Dorsolateral prefrontal cortex (tissue), 120 donors: ENCODE measurements at regions of chr6 and their contacts with region 1.

Region 1: GRCh38 chr6:105087571-105088211 is 92.1 kb downstream of the POPDC3 start:
- DNase-seq: peak in 4 of 10 donors; percentile 13 to 39 (median 29)
- H3K4me3 ChIP-seq: no peak overlapping the region
- H3K27ac ChIP-seq: no peak overlapping the region
- H3K27me3 ChIP-seq: no peaks in the 10 kb centered on the region
- CTCF ChIP-seq: peak; percentile 84 to 99 (median 93)

Region 2: DNA sequence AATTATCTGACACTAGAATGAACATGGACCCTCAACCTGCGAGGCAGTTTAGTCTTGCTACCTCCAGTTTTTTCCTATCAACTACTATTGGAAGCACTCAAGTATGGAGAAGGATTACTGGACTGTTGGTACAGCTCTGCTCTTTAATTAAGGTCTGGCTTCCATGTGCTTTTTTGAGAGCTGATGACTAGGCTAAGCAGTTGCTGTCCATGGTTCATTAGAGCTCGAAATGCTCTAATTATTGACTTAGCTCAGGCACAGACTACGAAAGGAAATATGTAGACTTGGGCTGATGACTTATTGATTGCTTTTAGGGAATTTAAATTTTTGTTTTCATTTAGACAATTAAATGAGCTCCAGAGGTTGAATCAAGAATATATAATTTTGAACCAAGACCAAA is 1509.6 kb before region 1 on chr6:
- intact Hi-C with region 1: no loop called
- DNase-seq: no peak
- H3K4me3 ChIP-seq: no peak overlapping the region
- H3K27ac ChIP-seq: no peak overlapping the region
- H3K27me3 ChIP-seq: no peaks in the 10 kb centered on the region
- CTCF ChIP-seq: no peak

Region 3: DNA sequence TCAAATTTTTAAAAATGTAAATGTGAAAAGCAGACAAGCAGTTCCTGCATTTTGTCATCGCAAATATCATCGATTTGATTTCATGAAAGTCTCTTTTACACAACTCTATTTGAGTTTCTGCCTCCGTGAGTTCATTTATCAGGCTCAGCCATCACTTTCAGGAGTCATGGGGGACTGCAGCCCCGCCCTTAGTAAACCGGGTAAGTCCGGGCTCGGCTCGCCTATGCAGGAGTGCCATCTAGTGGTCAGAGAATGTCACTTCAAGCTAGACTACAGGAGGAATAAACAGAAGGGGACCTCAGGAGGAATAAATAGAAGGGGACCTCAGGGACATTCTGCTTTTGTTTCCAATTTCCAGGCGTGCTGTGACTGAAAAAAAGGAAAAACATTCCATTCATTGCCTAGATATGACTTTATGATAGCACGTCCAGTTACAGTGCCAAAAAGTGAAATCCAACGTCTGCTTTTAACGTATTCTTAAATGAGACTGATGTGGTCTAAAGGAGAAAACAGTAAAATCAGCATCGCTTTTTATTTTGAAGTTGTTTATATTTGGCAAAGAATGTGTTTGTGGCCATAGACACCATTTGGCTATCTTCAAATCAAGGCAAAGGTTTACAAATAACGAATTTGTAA is 561.9 kb before region 1 on chr6:
- intact Hi-C with region 1: loop called in 1 of 2 experiments (anchors 5 kb)
- DNase-seq: peak; percentile 57 to 85 (median 80)
- H3K4me3 ChIP-seq: peak overlapping the region; percentile 14 to 68 (median 44)
- H3K27ac ChIP-seq: peak overlapping the region in 56 of 59 donors; percentile 8 to 88 (median 69)
- H3K27me3 ChIP-seq: no peaks in the 10 kb centered on the region
- CTCF ChIP-seq: peak; percentile 86 to 99 (median 94)

Region 4: GRCh38 chr6:105045526-105045925 is 42.2 kb before region 1 on chr6:
- intact Hi-C with region 1: no loop called
- DNase-seq: no peak
- H3K4me3 ChIP-seq: no peak overlapping the region
- H3K27ac ChIP-seq: no peak overlapping the region
- H3K27me3 ChIP-seq: no peaks in the 10 kb centered on the region
- CTCF ChIP-seq: no peak

Region 5: DNA sequence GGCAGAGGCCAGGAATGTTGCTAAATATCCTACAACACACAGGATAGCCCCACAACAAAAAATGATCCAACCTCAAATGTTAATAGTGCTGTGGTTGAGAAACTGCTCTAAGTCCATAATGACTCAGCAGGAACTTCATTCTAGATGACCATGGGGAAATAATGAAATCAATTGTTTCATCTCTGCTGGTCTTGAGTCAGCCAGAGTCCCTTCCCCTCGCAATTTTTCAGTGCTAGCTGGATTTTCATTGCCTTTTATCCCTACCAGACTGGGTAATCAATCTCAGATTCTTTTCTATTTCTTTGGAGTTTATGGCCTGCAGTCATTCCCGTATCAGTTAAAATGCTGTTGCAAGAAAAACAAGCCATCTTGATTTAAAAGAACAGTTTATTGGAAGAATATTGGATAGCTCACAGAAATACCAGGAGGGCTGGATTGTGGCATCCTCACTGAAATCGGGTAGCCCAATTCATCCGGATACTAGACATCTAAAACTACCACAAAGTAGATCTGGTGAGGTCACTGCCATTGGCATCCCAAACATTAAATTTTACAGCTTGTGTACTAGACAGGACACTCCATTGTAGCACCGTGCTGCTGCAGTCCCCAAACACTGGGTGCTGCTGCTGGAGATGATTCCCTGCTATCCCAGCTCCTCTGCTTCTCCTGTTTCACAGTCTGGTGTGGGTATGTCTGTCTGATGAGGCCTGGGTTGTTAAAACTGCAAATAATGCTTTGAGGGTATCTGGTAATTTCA is 122.4 kb after region 1 on chr6:
- intact Hi-C with region 1: no loop called
- DNase-seq: no peak
- H3K4me3 ChIP-seq: no peak overlapping the region
- H3K27ac ChIP-seq: peak overlapping the region in 3 of 59 donors; percentile 27 to 59 (median 36)
- H3K27me3 ChIP-seq: no peaks in the 10 kb centered on the region
- CTCF ChIP-seq: no peak

Region 6: DNA sequence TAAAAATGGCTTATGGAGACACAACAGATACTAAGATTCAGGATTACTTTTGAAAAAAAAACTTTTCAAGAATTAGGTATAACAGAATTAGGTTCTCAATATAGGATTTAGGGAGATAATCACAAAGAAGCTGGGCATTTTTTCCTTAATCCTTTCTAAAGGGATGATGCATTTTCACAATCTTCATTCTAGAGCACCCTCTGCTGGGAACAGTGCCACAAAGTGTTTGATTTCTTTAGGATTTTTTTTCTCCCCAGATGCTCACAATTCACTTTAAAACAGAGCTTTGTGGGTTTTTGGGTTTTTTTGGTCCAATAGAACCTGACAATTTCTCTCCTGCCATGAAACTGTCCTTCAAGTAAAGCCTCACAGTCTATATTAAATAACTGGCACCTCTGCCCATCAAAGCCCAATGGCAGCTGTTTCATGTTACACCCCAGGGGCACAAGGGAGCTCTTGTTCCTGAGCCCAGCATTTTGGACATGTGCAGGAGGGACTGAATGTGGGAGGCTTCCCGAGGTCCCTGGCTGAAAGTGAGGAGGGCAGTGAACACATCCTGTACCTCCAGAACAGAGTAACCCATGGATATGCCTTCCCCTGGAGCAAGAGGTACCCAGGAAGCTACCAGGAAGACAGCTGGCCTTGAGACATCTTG is 275.5 kb after region 1 on chr6:
- intact Hi-C with region 1: loop called (anchors 1 to 5 kb)
- DNase-seq: peak in 1 of 10 donors; percentile 42
- H3K4me3 ChIP-seq: no peak overlapping the region
- H3K27ac ChIP-seq: peak overlapping the region in 50 of 59 donors; percentile 3 to 88 (median 62)
- H3K27me3 ChIP-seq: no peaks in the 10 kb centered on the region
- CTCF ChIP-seq: peak in 53 of 56 donors; percentile 35 to 78 (median 59)

Region 7: DNA sequence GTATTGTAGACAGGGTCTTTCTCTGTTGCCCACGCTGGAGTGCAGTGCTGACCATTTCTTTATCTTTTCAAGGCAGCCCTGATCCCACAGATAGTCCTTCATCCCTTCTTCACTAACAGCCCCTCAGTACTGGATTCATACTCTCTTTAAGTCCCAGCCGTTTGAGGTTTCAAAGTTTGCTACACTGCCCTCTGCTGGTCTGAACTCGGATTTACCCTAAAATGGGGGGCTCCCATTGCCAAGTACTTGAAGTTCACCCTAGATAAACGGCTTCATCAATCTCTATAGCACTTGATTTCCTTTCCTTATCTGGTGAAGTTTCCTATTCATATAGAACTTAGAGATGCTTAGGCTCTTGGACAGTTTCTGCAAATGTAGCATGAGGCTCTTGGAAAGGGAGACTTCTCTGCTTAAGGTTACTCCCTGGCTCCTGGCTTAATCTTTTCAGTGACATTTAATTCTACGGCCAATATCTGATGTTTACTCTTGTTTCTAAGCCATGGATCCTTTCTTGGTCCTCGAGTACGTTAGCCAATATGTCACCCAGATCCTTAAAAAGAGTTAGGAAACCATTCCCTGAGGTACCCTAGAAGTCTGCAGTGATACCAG is 336.6 kb after region 1 on chr6:
- intact Hi-C with region 1: loop called in 1 of 2 experiments (anchors 2 kb)
- DNase-seq: peak in 2 of 10 donors; percentile 40 to 45
- H3K4me3 ChIP-seq: no peak overlapping the region
- H3K27ac ChIP-seq: no peak overlapping the region
- H3K27me3 ChIP-seq: no peaks in the 10 kb centered on the region
- CTCF ChIP-seq: peak; percentile 39 to 78 (median 62)

Region 8: GRCh38 chr6:105519881-105520304 is 432.2 kb after region 1 on chr6:
- intact Hi-C with region 1: no loop called
- DNase-seq: no peak
- H3K4me3 ChIP-seq: no peak overlapping the region
- H3K27ac ChIP-seq: no peak overlapping the region
- H3K27me3 ChIP-seq: no peaks in the 10 kb centered on the region
- CTCF ChIP-seq: no peak